ENCODE measurements at regions of chrX and their contacts with region 1.

Region 1: DNA sequence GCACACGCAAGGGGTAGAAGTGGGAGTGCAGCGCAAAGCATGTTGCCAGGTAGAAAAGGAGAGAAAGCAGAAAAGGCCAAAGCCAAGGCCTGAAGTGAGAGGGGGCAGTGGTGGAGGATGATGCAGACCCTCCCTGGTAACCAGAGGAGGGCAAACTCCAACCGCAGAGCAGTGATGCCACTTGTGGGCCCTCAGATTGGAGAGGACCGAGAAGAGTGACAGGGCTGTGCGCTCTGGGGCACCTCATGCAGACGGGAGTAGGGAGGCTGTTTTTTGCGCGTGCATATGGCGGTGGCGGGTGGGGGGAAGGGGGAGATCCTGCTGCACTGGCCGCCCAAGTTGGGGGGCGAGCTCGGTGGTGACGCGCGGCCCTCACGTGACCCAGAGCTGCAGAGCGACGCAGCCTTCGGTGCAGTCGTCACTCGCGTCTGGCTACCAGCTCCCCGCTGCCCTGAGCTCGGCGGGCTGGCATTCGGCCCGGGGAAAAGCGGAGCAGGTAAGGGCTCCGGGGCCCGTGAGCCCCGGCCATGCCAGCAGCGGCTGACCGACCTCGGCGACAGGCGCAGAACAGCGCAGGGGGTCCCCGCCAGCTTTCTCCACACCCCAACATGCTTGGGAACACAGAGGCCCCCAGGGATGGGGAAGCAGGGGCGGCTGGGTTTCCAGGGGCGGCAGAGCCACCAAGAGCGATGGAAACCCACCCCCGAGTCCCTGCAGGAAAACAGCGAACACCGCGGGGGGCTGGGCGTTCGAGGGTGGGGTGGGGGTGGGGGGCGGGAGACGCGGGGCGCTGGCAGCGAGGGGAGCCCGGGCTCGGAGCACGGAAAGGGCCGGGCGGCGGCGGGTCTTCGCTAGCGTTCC is at the start of gene BEX3:
- DNase-seq: peak; percentile 48 to 69
- ATAC-seq: peak; percentile 82 to 86
- H3K4me3 ChIP-seq: peak within 1 kb of the TSS; percentile 67
- H3K27ac ChIP-seq: peak within 1 kb of the TSS; percentile 97 to 100
- H3K4me1 ChIP-seq: peaks cover 36% of the 10 kb centered on the region
- CTCF ChIP-seq: no peak
- EP300 ChIP-seq: no peak
- POLR2A ChIP-seq: peak; percentile 70
- RAD21 ChIP-seq: no peak
- polyA plus RNA-seq, gene BEX3: 328 and 404 TPM in 2 replicates

Region 2: GRCh38 chrX:102835504-102836146 is 540.7 kb before region 1 on chrX:
- CTCF ChIA-PET with region 1: no interaction called
- POLR2A ChIA-PET with region 1: no interaction called
- DNase-seq: peak in 1 of 2 experiments; percentile 45
- ATAC-seq: peak; percentile 70 to 77; a peak in 5 of 6 replicates
- H3K4me3 ChIP-seq: no peak overlapping the region
- H3K27ac ChIP-seq: no peak overlapping the region
- H3K4me1 ChIP-seq: peaks cover 14% of the 10 kb centered on the region
- CTCF ChIP-seq: peak; percentile 49
- EP300 ChIP-seq: no peak
- POLR2A ChIP-seq: no peak
- RAD21 ChIP-seq: peak; percentile 50 to 56

Region 3: DNA sequence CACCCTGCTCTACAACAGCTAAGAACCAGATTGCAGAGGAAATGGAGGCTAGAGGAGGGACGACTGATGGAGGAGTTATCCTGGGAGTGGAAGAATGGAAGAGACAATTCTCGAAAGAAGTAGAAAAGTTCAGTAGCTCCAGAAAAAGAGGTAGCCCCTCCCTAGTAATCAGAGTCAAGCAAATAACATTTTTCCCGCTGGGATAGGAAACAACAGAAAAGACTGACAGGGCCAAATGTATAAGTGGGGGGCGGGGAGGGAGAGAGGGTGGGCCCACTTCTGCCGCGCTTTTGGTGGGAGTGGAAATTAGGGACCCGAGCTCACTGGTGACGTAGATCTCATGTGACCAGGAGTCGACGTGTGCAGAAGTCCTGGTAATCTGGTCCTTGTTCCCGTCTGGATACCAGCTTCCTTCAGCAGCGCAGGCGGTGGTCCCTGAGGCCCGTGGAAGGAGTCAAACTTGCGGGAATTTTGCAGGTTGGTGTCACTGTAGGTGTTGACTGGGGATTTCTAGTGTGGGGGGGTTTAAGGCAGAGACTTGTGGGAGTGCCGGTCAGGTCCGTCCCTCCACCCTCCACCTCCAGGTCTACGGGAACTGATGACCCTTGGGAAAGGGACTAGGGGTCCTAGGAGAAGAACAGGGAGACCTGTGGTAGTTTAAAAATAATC is 20.1 kb before region 1 on chrX and contains the start of gene TCEAL9:
- CTCF ChIA-PET with region 1: interaction called, 4 read pairs
- POLR2A ChIA-PET with region 1: interaction called, 14 read pairs
- DNase-seq: peak; percentile 47 to 74
- ATAC-seq: peak; percentile 96 to 97
- H3K4me3 ChIP-seq: peak within 1 kb of the TSS; percentile 59
- H3K27ac ChIP-seq: peak within 1 kb of the TSS; percentile 81 to 85
- H3K4me1 ChIP-seq: peaks cover 8% of the 10 kb centered on the region
- CTCF ChIP-seq: no peak
- EP300 ChIP-seq: no peak
- POLR2A ChIP-seq: peak; percentile 71
- RAD21 ChIP-seq: no peak
- polyA plus RNA-seq, gene TCEAL9: 39.2 and 83.7 TPM in 2 replicates